ENCODE measurements at regions of chr9 and their contacts with region 1.

Region 1: GRCh38 chr9:72592502-72593403 is 71.3 kb downstream of the TMC1 start:
- DNase-seq: no peak
- H3K4me3 ChIP-seq: no peak overlapping the region
- H3K27ac ChIP-seq: no peak overlapping the region
- H3K4me1 ChIP-seq: peaks cover 0 to 6% of the 10 kb centered on the region in 2 donors
- H3K27me3 ChIP-seq: no peaks in the 10 kb centered on the region
- CTCF ChIP-seq: peak; percentile 74 to 82 (median 78)

Region 2: DNA sequence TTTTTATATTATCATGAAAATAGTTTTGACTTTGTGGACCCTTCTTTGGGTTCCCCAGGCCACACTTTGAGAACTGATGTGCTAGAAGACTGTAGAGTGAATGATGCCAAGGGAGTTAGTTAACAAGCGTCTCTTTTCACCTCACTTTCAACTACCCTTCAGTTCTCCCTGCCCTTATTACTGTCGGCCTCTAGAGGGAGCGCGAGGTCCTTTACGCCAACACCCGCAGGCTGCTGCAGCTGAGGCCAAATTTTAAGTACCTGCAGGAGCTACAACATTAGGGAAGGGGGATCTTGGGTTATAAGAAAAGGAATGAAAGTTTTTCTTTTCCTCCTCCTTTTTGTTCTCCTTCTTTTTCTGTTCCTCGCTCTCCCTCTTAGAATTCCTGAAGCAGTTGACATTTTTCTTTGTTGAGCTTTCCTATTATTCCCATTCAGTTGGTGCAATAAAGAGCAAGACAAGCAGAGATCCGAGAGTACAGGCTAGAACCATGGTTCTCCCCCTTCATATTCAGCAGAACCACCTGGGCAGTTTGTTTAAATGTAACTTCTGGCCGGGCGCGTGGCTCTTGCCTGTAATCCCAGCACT is 311.7 kb before region 1 on chr9:
- intact Hi-C with region 1: loop called (anchors 1 kb)
- DNase-seq: peak in 1 of 2 donors; percentile 77
- H3K4me3 ChIP-seq: no peak overlapping the region
- H3K27ac ChIP-seq: no peak overlapping the region
- H3K4me1 ChIP-seq: no peaks in the 10 kb centered on the region
- H3K27me3 ChIP-seq: no peaks in the 10 kb centered on the region
- CTCF ChIP-seq: peak; percentile 70 to 92 (median 82)

Region 3: DNA sequence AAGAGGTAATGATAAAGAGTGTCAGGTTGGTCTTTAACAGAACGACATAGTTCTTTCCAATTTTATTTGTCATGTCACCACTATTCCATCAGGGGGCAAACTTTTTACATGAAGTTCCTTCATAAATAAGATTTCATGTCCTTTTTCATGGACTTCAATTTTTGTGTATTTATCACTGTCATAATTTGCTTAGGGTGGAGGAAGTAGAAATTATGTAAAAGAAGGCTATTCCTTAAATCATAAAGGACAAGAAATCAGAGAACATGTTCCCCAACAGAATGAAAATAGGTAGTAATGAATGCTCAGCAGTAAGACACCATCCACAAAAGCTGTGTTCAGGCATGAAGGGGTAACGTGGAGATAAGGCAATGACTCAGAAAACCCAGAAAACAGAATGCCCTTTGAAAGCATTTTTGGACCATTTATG is 300.5 kb before region 1 on chr9:
- intact Hi-C with region 1: loop called (anchors 2 kb)
- DNase-seq: no peak
- H3K4me3 ChIP-seq: no peak overlapping the region
- H3K27ac ChIP-seq: no peak overlapping the region
- H3K4me1 ChIP-seq: no peaks in the 10 kb centered on the region
- H3K27me3 ChIP-seq: no peaks in the 10 kb centered on the region
- CTCF ChIP-seq: peak; percentile 36 to 61 (median 52)

Region 4: DNA sequence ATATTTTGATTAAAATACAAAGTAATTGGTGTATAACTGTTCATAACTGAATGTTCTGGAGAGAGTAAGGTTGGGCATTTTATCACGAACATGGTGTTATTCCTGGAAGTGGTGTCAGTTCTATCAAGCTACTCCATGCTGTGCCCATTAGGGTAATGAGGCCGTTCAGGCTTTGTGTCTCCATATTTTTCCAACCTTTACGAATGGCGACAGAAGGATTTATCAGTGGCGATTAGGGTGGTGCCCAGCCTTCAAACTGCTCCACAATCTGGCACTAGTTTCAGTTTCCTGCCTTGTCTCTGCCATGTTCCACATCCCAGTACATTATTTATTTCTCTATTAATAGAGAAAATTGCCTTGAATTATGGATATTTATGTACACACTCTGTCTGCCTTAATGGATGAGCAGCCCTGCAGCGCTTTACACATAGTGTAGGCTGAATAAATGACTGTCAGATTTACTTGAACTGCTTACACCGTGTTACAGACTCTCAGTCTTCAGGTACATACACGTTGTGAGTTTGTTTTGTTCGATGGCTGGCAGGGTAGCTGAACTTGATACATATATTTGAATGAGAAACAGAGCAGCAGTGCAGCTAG is 95.2 kb before region 1 on chr9:
- intact Hi-C with region 1: no loop called
- DNase-seq: no peak
- H3K4me3 ChIP-seq: no peak overlapping the region
- H3K27ac ChIP-seq: no peak overlapping the region
- H3K4me1 ChIP-seq: no peaks in the 10 kb centered on the region
- H3K27me3 ChIP-seq: no peaks in the 10 kb centered on the region
- CTCF ChIP-seq: no peak

Region 5: DNA sequence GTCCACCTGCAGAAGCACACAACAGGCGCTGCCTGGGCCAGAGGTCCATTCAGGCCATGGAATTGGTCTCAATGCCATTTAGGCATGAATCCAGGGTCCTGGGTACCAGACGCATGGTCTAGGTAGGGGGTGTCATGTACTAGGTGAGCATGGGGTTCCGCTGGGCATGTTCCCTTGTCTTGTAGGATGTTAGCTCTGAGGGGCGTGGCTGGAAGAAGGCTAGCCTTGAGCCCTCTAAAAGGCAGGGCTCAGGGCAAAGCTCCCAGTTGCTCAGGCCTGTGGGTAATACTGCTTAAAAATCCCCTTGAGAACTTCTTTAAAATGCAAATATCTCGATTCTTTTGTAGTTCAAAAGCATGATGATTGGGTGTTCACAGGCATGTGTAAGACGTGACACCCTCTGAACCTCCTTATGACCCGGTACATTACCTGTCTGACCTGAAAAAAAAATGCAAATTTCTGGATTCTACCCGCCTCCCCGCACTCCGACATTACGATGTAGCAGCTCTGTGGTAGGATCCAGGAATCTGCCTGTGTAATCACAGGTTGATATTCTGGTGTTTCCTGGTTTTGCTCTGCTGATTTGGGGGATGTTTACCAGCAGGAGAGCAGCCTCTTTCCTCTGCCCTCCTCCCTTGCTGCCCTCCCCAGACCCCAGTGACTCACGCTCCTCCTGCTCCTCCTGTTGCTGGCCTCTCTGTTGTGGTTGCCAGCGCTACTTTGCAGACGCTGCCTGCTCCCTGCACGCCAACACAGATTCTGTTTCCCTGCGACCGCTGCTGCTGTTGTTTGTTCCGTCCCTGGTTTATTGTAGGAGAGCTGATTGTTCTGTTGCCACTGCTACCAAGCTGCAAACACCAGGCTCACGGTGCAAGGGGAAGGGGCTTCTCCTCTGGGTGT is 65.6 kb before region 1 on chr9:
- intact Hi-C with region 1: no loop called
- DNase-seq: peak; percentile 23 to 77
- H3K4me3 ChIP-seq: peak overlapping the region in 1 of 2 donors; percentile 24
- H3K27ac ChIP-seq: no peak overlapping the region
- H3K4me1 ChIP-seq: peaks cover 0 to 2% of the 10 kb centered on the region in 2 donors
- H3K27me3 ChIP-seq: no peaks in the 10 kb centered on the region
- CTCF ChIP-seq: no peak

Region 6: GRCh38 chr9:72734631-72735030 is 141.9 kb after region 1 on chr9:
- intact Hi-C with region 1: no loop called
- DNase-seq: no peak
- H3K4me3 ChIP-seq: no peak overlapping the region
- H3K27ac ChIP-seq: no peak overlapping the region
- H3K4me1 ChIP-seq: no peaks in the 10 kb centered on the region
- H3K27me3 ChIP-seq: no peaks in the 10 kb centered on the region
- CTCF ChIP-seq: no peak

Region 7: DNA sequence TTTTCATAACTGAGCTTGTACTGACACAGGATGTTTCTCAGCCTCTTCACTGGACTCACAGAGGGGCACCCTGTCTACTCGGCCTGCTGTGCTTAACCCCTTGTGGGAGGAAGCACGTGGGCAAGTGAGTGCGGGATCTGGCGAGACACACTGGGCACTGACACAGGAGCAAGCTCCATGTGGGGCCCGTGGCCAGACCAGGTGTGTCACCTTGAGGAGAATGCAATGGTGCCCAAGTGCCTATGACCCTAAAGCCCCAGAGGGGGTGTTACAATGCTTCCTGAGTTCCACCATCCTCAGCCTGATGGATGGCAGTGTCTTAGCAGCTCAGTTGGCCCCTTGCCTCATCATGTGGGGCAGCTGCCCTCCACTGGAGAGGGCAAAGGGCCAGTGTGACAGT is 231.2 kb after region 1 on chr9:
- intact Hi-C with region 1: loop called (anchors 5 kb)
- DNase-seq: no peak
- H3K4me3 ChIP-seq: no peak overlapping the region
- H3K27ac ChIP-seq: no peak overlapping the region
- H3K4me1 ChIP-seq: no peaks in the 10 kb centered on the region
- H3K27me3 ChIP-seq: no peaks in the 10 kb centered on the region
- CTCF ChIP-seq: no peak

Region 8: DNA sequence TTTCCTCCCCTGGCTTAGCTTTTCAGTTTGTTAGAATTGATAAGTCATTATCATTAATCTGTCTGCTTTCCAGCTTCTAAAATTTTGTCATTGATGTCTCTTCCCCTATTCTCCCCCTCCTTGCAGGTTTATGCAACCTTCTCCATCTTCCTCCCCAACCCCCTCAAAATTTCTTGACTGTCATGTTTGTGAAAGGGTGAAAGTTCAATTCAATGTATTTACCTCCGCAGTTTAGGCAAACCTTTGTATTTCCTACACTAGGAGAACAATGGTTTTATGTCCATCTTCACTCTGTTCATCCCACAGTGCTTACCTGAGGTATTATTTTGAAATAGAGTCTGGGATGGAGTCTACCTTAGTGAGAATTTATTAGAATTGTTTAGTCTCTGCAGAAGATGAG is 242.2 kb after region 1 on chr9:
- intact Hi-C with region 1: no loop called
- DNase-seq: no peak
- H3K4me3 ChIP-seq: no peak overlapping the region
- H3K27ac ChIP-seq: no peak overlapping the region
- H3K4me1 ChIP-seq: no peaks in the 10 kb centered on the region
- H3K27me3 ChIP-seq: no peaks in the 10 kb centered on the region
- CTCF ChIP-seq: no peak

Measured in ascending aorta (tissue), 2 donors.